PC-3 (cell line): ENCODE measurements at regions of chr4 and their contacts with region 1.

Region 1: GRCh38 chr4:153731239-153731638 is 28.6 kb downstream of the RNF175 start:
- DNase-seq: no peak
- ATAC-seq: no peak
- H3K4me3 ChIP-seq: no peak overlapping the region
- H3K27ac ChIP-seq: no peak overlapping the region
- H3K4me1 ChIP-seq: no peaks in the 10 kb centered on the region
- H3K27me3 ChIP-seq: no peaks in the 10 kb centered on the region
- CTCF ChIP-seq: no peak

Region 2: DNA sequence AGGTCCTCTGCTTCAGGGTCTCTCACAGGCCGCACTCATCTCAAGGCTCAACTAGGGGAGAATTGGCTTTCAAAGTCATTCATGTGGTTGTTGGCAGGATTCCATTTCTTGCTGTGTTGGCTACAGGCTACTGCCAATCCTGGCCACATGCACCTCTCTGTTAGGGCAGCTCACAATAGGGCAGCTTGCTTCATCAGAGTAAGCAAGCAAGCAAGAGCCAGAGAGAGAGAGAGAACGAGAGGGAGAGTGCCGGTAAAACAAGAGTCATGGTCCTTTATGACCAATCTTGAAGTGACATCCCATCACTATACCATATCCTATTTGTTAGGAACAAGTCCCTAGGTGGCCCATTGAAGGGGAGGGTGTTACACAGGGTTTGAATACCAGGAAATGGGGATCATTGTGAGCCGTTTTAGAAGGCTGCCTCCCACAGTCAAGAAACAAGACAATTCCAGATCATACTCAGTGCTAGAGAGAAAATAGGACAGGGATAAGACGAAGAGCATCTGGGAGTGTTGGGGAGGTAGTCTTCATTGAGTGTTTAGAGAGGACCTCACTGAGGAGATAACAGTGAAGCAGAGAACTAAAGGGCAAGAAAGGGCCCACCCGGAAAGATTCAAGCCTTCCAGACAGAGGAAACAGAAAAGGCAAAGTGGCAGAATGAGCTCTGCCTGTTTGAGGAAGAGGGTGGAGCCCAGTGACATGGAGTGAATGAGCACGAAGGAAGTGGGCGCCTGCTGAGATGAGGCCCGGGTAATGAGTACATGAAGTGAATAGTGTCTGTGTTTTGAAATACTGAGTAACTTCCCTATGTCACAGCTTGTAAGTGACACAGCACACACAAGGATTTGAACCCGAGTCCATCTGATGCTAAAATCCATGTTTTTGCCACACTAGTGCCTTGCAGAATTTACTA is 79.9 kb before region 1 on chr4:
- CTCF ChIA-PET with region 1: no interaction called
- POLR2A ChIA-PET with region 1: no interaction called
- intact Hi-C with region 1: loop called (anchors 5 kb)
- DNase-seq: peak; percentile 28
- ATAC-seq: no peak
- H3K4me3 ChIP-seq: peak overlapping the region; percentile 24; the same call in 1 of the 2 replicates
- H3K27ac ChIP-seq: peak overlapping the region; percentile 83
- H3K4me1 ChIP-seq: peaks cover 26% of the 10 kb centered on the region
- H3K27me3 ChIP-seq: no peaks in the 10 kb centered on the region
- CTCF ChIP-seq: no peak